ENCODE measurements at regions of chr11 and their contacts with region 1.

Region 1: GRCh38 chr11:124934862-124935547 is 842 bp downstream of the HEPACAM start:
- DNase-seq: peak; percentile 46
- H3K4me3 ChIP-seq: no peak overlapping the region
- H3K27ac ChIP-seq: no peak overlapping the region
- H3K4me1 ChIP-seq: peaks cover 5% of the 10 kb centered on the region
- H3K27me3 ChIP-seq: no peaks in the 10 kb centered on the region
- CTCF ChIP-seq: peak in 1 of 2 donors; percentile 19

Region 2: GRCh38 chr11:125036933-125037332 is 101.9 kb after region 1 on chr11:
- CTCF ChIA-PET with region 1: no interaction called
- dilution Hi-C with region 1: loop called (anchors 5 kb)
- in situ Hi-C with region 1: no loop called
- intact Hi-C with region 1: no loop called
- DNase-seq: peak; percentile 86
- H3K4me3 ChIP-seq: no peak overlapping the region
- H3K27ac ChIP-seq: no peak overlapping the region
- H3K4me1 ChIP-seq: peaks cover 7% of the 10 kb centered on the region
- H3K27me3 ChIP-seq: no peaks in the 10 kb centered on the region
- CTCF ChIP-seq: no peak

Measured in mammary epithelial cell (primary cell).